ENCODE measurements at regions of chr20 and their contacts with region 1.

Region 1: DNA sequence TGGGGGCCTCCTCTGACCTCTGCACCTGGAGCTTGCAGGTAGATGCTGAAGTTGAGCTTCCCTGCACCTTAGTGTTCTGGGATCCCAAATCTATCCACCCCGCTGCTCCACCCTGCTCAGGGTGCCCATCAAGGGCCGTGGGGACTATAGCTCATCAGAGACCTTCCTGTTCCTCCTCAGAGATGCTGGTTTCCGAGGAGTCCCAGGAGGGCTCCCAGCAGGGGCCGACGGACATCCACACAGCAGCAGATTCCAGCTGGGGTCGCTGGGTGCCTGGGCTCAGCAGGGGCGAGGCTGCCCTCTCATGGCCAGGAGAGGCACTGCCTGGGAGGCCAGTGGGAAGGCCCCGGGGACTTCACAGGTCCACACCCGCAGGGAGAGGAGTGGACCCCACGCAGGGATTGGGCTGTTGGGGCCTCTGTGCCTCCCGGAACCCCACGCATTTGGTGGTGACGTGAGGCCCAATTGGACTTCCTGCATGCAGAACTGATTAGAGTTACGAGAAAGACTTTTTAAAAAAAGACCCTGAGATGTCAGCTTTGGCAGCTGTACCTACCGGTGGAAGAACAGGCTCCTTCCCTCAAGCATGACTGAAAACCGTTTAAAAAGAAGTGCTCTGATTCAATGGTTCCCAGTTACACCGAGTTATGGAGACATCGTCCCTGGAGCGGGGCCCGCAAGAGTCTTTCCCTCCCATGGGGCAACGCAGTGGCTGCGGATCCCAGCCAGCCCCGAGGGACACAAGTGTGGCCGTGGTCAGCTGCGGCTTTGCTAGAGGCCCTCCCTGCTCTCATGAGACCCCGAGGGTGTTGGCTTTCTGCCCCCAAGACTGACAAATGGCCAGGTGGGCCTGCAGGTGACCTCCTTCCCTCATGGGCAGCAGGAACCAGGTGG is 25.3 kb upstream of the SLCO4A1 start:
- DNase-seq: no peak
- H3K4me3 ChIP-seq: no peak overlapping the region
- H3K27ac ChIP-seq: peak overlapping the region; percentile 55 to 79 (median 62)
- H3K4me1 ChIP-seq: peaks cover 17 to 32% (median 28%) of the 10 kb centered on the region in 4 donors
- H3K27me3 ChIP-seq: peaks cover 0 to 28% (median 0%) of the 10 kb centered on the region in 4 donors
- CTCF ChIP-seq: peak in 2 of 3 experiments; percentile 94 to 96
- EP300 ChIP-seq: no peak
- POLR2A ChIP-seq: no peak

Region 2: GRCh38 chr20:62409931-62410745 is 206.8 kb before region 1 on chr20:
- intact Hi-C with region 1: loop called (anchors 10 kb)
- DNase-seq: no peak
- H3K4me3 ChIP-seq: no peak overlapping the region
- H3K27ac ChIP-seq: peak overlapping the region in 2 of 4 donors; percentile 7 to 34
- H3K4me1 ChIP-seq: peaks cover 32 to 44% (median 39%) of the 10 kb centered on the region in 4 donors
- H3K27me3 ChIP-seq: peaks cover 0 to 8% (median 0%) of the 10 kb centered on the region in 4 donors
- CTCF ChIP-seq: peak; percentile 38 to 53 (median 52)
- EP300 ChIP-seq: no peak
- POLR2A ChIP-seq: no peak

Region 3: DNA sequence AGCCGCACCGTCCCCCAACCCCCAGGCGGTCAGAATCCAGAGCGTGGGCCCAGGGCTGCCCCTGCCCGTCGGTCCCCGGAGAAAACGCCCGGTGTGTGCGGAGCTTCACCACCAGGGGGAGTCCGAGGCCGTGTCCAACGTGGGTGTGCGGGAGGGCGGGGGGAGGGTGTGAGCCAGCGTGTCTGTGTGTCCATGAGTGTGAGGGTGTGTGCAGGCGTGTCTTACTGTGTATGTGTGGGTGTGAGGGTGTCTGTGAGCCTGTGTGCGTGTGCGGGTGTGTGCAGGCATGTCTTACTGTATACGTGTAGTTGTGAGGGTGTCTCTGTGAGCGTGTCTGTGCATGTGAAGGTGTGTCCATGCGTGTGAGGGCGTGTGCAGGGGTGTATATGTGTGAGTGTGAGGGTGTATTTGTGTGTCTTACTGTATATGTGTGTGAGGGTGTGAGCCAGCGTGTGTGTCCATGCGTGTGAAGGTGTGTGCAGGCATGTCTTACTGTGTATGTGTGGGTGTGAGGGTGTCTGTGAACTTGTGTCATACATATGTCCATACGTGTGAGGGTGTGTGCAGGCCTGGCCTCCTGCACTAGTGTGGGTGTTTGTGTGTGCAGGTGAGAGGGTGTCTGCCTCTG is 116.6 kb before region 1 on chr20:
- intact Hi-C with region 1: loop called (anchors 1 kb)
- DNase-seq: peak; percentile 95
- H3K4me3 ChIP-seq: no peak overlapping the region
- H3K27ac ChIP-seq: no peak overlapping the region
- H3K4me1 ChIP-seq: peaks cover 21 to 29% (median 26%) of the 10 kb centered on the region in 4 donors
- H3K27me3 ChIP-seq: peaks cover 0 to 21% (median 0%) of the 10 kb centered on the region in 4 donors
- CTCF ChIP-seq: peak; percentile 91 to 97 (median 94)
- EP300 ChIP-seq: no peak
- POLR2A ChIP-seq: no peak